Heart left ventricle (tissue), 16 donors: ENCODE measurements at regions of chr6 and their contacts with region 1.

Region 1: DNA sequence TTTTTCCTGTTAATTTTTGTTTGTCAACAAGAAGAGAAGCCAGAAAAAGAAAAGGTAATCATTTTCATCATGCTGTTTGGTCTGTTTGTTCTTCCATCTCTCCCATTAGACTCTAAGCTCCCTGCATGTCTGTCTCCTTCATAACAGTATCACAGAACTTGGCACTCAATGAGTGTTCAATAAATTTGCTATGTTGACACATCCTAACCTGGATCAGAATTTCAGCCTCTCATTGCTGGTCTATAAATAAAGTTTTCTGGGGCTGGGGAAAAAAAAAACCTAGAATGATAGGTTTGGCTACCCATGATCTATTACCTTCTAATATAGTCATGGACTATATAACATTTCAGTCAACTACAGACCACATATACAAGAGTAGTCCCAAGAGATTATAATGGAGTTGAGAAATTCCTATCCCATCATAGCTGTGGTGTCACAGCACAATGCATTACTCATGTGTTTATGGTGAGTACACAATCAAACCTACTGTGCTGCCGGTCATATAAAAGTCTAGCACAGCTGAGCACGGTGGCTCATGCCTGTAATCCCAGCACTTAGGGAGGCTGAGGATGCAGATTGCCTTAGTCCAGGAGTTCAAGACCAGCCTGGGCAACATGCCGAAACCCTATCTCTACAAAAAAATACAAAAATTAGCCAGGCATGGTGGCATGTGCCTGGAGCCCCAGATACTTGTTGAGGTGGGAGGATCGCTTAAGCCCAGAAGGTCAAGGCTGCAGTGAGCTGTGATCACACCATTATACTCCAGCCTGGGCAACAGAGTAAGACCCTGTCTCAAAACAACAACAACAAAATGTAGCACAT is 5.9 kb downstream of the NUDT3 start:
- DNase-seq: no peak
- ATAC-seq: no peak
- H3K4me3 ChIP-seq: no peak overlapping the region
- H3K27ac ChIP-seq: no peak overlapping the region
- H3K4me1 ChIP-seq: peaks cover 0 to 80% (median 63%) of the 10 kb centered on the region in 12 donors
- H3K27me3 ChIP-seq: no peaks in the 10 kb centered on the region
- CTCF ChIP-seq: no peak
- POLR2A ChIP-seq: no peak

Region 2: GRCh38 chr6:34273242-34273805 is 113.2 kb before region 1 on chr6:
- intact Hi-C with region 1: loop called in 1 of 10 experiments (anchors 10 kb)
- DNase-seq: peak; percentile 72 to 82 (median 78)
- ATAC-seq: peak; percentile 64 to 93 (median 84)
- H3K4me3 ChIP-seq: no peak overlapping the region
- H3K27ac ChIP-seq: peak overlapping the region in 11 of 12 donors; percentile 41 to 73 (median 59)
- H3K4me1 ChIP-seq: peaks cover 0 to 52% (median 26%) of the 10 kb centered on the region in 12 donors
- H3K27me3 ChIP-seq: no peaks in the 10 kb centered on the region
- CTCF ChIP-seq: no peak
- POLR2A ChIP-seq: no peak